ENCODE measurements at regions of chr12 and their contacts with region 1.

Region 1: GRCh38 chr12:47715393-47715876 is 9.6 kb upstream of the RPAP3 start:
- DNase-seq: peak; percentile 90
- ATAC-seq: peak; percentile 88
- H3K4me3 Mint-ChIP-seq: no peak overlapping the region
- H3K27ac Mint-ChIP-seq: peak overlapping the region; percentile 37
- H3K4me1 Mint-ChIP-seq: peaks cover 37% of the 10 kb centered on the region
- H3K27me3 Mint-ChIP-seq: no peaks in the 10 kb centered on the region

Region 2: GRCh38 chr12:47591361-47591791 is 124.1 kb before region 1 on chr12:
- CTCF ChIA-PET with region 1: no interaction called
- POLR2A ChIA-PET with region 1: no interaction called
- DNase-seq: no peak
- ATAC-seq: no peak
- H3K4me3 Mint-ChIP-seq: no peak overlapping the region
- H3K27ac Mint-ChIP-seq: no peak overlapping the region
- H3K4me1 Mint-ChIP-seq: peaks cover 4% of the 10 kb centered on the region
- H3K27me3 Mint-ChIP-seq: no peaks in the 10 kb centered on the region

Region 3: GRCh38 chr12:47725893-47726292 is 10.5 kb after region 1 on chr12:
- CTCF ChIA-PET with region 1: interaction called, 297 read pairs
- POLR2A ChIA-PET with region 1: no interaction called
- DNase-seq: no peak
- ATAC-seq: no peak
- H3K4me3 Mint-ChIP-seq: no peak overlapping the region
- H3K27ac Mint-ChIP-seq: no peak overlapping the region
- H3K4me1 Mint-ChIP-seq: peaks cover 39% of the 10 kb centered on the region
- H3K27me3 Mint-ChIP-seq: no peaks in the 10 kb centered on the region

Region 4: GRCh38 chr12:47758834-47759690 is 43.6 kb after region 1 on chr12 and contains the start of gene RAPGEF3:
- CTCF ChIA-PET with region 1: interaction called, 26 read pairs
- POLR2A ChIA-PET with region 1: no interaction called
- DNase-seq: peak; percentile 64
- ATAC-seq: peak; percentile 86
- H3K4me3 Mint-ChIP-seq: peak within 1 kb of the TSS; percentile 67
- H3K27ac Mint-ChIP-seq: no peak within 1 kb of the TSS
- H3K4me1 Mint-ChIP-seq: peaks cover 38% of the 10 kb centered on the region
- H3K27me3 Mint-ChIP-seq: peaks cover 4% of the 10 kb centered on the region
- total RNA-seq, gene RAPGEF3: 0.24 TPM in 1 of 2 experiments, not detected in the other

Region 5: DNA sequence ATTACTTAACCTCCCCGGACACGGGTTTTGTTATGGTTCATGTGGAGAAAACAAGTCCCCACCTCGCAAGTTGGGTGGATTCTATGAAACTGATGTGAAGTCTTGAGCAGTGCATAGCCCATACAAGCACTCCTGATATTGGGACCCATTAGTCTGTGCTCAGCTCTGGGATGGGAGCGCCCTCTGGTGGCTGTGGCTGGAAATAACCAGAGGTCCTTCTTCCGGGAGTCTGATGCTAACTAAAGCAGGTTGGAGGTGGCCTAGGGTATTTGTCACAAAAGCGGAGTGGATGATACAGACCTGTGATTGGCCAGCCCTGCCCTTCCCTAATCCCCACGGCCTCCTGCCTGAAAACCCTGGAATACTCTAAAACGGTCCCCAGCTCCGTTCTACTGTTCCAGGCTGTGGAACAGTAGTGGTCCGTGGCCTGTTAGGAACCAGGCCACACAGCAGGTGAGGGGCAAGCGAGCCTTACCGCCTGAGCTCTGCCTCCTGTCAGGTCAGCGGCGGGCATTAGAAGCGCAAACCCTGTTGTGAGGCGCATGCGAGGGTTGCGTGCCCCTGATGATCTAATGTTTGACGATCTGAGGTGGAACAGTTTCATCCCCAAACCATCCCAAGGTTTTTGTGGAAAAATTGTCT is 64.0 kb after region 1 on chr12:
- CTCF ChIA-PET with region 1: interaction called, 94 read pairs
- POLR2A ChIA-PET with region 1: no interaction called
- DNase-seq: peak; percentile 94
- ATAC-seq: peak; percentile 91
- H3K4me3 Mint-ChIP-seq: no peak overlapping the region
- H3K27ac Mint-ChIP-seq: peak overlapping the region; percentile 47
- H3K4me1 Mint-ChIP-seq: peaks cover 44% of the 10 kb centered on the region
- H3K27me3 Mint-ChIP-seq: no peaks in the 10 kb centered on the region

Region 6: GRCh38 chr12:47828608-47829536 is 113.4 kb after region 1 on chr12:
- CTCF ChIA-PET with region 1: interaction called, 31 read pairs
- POLR2A ChIA-PET with region 1: interaction called, 5 read pairs
- DNase-seq: no peak
- ATAC-seq: no peak
- H3K4me3 Mint-ChIP-seq: no peak overlapping the region
- H3K27ac Mint-ChIP-seq: peak overlapping the region; percentile 71
- H3K4me1 Mint-ChIP-seq: peaks cover 90% of the 10 kb centered on the region
- H3K27me3 Mint-ChIP-seq: no peaks in the 10 kb centered on the region

Region 7: GRCh38 chr12:48592591-48593088 is 877.2 kb after region 1 on chr12:
- CTCF ChIA-PET with region 1: no interaction called
- POLR2A ChIA-PET with region 1: no interaction called
- DNase-seq: no peak
- ATAC-seq: no peak
- H3K4me3 Mint-ChIP-seq: no peak overlapping the region
- H3K27ac Mint-ChIP-seq: no peak overlapping the region
- H3K4me1 Mint-ChIP-seq: no peaks in the 10 kb centered on the region
- H3K27me3 Mint-ChIP-seq: peaks cover 32% of the 10 kb centered on the region

Measured in activated CD8-positive, alpha-beta T cell treated with anti-CD3 and anti-CD28 coated beads, Interleukin-2, amount 10 ng/mL, durations not matched to agents 7 days and 5 days (primary cell).